Activated CD8-positive, alpha-beta T cell treated with anti-CD3 and anti-CD28 coated beads for 36 hours (primary cell): ENCODE measurements at regions of chr5 and their contacts with region 1.

Region 1: DNA sequence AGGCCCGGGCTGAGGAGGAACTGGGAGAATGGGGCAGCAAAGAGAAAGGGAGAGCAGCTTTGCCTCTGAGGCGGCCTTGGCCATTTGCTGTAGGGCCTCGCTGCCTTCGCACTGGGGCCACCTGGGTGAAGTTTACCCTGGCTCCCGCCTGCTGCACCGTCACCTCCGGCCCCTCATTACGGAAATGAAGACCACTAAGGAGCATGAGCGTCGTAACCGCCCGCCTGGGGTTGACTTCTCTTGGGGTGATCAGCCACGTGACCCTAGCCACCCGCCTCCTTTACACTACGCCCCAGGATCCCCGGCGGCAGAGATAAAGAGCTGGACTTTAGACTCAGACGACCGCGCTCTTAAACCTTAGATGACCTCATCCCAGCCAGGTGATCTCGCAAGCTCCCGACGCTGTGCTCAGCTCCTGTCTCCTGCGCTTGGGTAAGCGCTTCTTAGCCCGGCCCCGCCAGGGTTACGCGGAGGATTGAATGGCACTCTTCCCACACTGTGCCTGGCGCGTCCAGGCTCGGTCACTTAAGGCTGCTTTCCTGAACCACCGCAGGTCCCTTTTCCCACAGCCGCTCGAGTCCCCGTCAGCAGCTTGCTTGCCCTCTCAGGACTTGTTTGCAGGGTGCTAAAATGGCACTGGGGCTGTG is 107.9 kb upstream of the LARP1 start:
- DNase-seq: peak; percentile 64
- ATAC-seq: peak; percentile 72
- H3K4me3 Mint-ChIP-seq: peak overlapping the region; percentile 62
- H3K27ac Mint-ChIP-seq: peak overlapping the region; percentile 36
- H3K4me1 Mint-ChIP-seq: peaks cover 13% of the 10 kb centered on the region
- H3K27me3 Mint-ChIP-seq: no peaks in the 10 kb centered on the region
- CTCF ChIP-seq: no peak

Region 2: GRCh38 chr5:154461531-154461930 is 185.7 kb before region 1 on chr5:
- CTCF ChIA-PET with region 1: no interaction called
- POLR2A ChIA-PET with region 1: no interaction called
- intact Hi-C with region 1: no loop called
- DNase-seq: no peak
- ATAC-seq: no peak
- H3K4me3 Mint-ChIP-seq: no peak overlapping the region
- H3K27ac Mint-ChIP-seq: no peak overlapping the region
- H3K4me1 Mint-ChIP-seq: no peaks in the 10 kb centered on the region
- H3K27me3 Mint-ChIP-seq: no peaks in the 10 kb centered on the region
- CTCF ChIP-seq: no peak

Region 3: GRCh38 chr5:154801083-154801482 is 153.8 kb after region 1 on chr5:
- CTCF ChIA-PET with region 1: interaction called, 10 read pairs
- POLR2A ChIA-PET with region 1: no interaction called
- intact Hi-C with region 1: no loop called
- DNase-seq: no peak
- ATAC-seq: no peak
- H3K4me3 Mint-ChIP-seq: no peak overlapping the region
- H3K27ac Mint-ChIP-seq: no peak overlapping the region
- H3K4me1 Mint-ChIP-seq: peaks cover 14% of the 10 kb centered on the region
- H3K27me3 Mint-ChIP-seq: no peaks in the 10 kb centered on the region
- CTCF ChIP-seq: no peak

Region 4: GRCh38 chr5:154811653-154812365 is 164.6 kb after region 1 on chr5:
- CTCF ChIA-PET with region 1: interaction called, 11 read pairs
- POLR2A ChIA-PET with region 1: no interaction called
- intact Hi-C with region 1: loop called (anchors 2 kb)
- DNase-seq: peak; percentile 72
- ATAC-seq: peak; percentile 92
- H3K4me3 Mint-ChIP-seq: no peak overlapping the region
- H3K27ac Mint-ChIP-seq: peak overlapping the region; percentile 70
- H3K4me1 Mint-ChIP-seq: peaks cover 29% of the 10 kb centered on the region
- H3K27me3 Mint-ChIP-seq: no peaks in the 10 kb centered on the region
- CTCF ChIP-seq: peak; percentile 87

Region 5: DNA sequence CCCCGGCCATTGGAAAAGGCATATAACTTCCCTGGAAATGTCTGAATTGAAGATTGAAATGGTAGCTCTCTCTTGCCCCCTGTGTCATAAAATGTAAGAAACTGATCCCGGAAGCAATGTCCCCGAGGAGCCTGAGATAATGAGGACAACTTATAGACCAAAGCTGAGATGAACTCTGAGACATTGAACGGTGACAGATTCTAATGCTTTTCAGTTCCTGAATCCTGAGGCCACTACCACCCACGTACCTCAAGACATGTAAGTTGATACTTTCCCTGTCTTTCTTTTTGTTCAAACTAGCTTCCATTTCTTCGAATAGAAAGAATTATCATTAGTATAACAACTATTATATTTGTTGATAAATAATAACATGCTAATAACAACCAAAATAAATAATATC is 417.3 kb after region 1 on chr5:
- CTCF ChIA-PET with region 1: no interaction called
- POLR2A ChIA-PET with region 1: no interaction called
- intact Hi-C with region 1: no loop called
- DNase-seq: no peak
- ATAC-seq: no peak
- H3K4me3 Mint-ChIP-seq: no peak overlapping the region
- H3K27ac Mint-ChIP-seq: no peak overlapping the region
- H3K4me1 Mint-ChIP-seq: no peaks in the 10 kb centered on the region
- H3K27me3 Mint-ChIP-seq: peaks cover 3% of the 10 kb centered on the region
- CTCF ChIP-seq: no peak

Region 6: GRCh38 chr5:155460501-155460931 is 813.3 kb after region 1 on chr5:
- CTCF ChIA-PET with region 1: no interaction called
- POLR2A ChIA-PET with region 1: no interaction called
- intact Hi-C with region 1: no loop called
- DNase-seq: no peak
- ATAC-seq: no peak
- H3K4me3 Mint-ChIP-seq: no peak overlapping the region
- H3K27ac Mint-ChIP-seq: no peak overlapping the region
- H3K4me1 Mint-ChIP-seq: no peaks in the 10 kb centered on the region
- H3K27me3 Mint-ChIP-seq: no peaks in the 10 kb centered on the region
- CTCF ChIP-seq: no peak